ENCODE measurements at regions of chr11 and their contacts with region 1.

Region 1: GRCh38 chr11:118198370-118198769 is 21.9 kb upstream of the SCN2B start:
- DNase-seq: no peak
- ATAC-seq: peak; percentile 94
- H3K4me3 ChIP-seq: no peak overlapping the region
- H3K27ac ChIP-seq: no peak overlapping the region
- H3K4me1 ChIP-seq: no peaks in the 10 kb centered on the region
- H3K27me3 ChIP-seq: no peaks in the 10 kb centered on the region; a peak in 1 of 4 replicates
- CTCF ChIP-seq: peak; percentile 93 to 96 (median 94)
- EP300 ChIP-seq: 0 out of 4 replicates have a peak, but pooled peaks of 1 of the 2 experiments have one; percentile 14
- POLR2A ChIP-seq: no peak
- RAD21 ChIP-seq: peak; percentile 97

Region 2: GRCh38 chr11:116787786-116788486 is 1410.4 kb before region 1 on chr11 and contains the start of gene ZPR1:
- CTCF ChIA-PET with region 1: no interaction called
- POLR2A ChIA-PET with region 1: no interaction called
- RAD21 ChIA-PET with region 1: no interaction called
- SMC1A ChIA-PET with region 1: no interaction called
- in situ Hi-C with region 1: no loop called
- intact Hi-C with region 1: no loop called
- DNase-seq: no peak
- ATAC-seq: peak; percentile 86
- H3K4me3 ChIP-seq: peak within 1 kb of the TSS; percentile 96
- H3K27ac ChIP-seq: peak within 1 kb of the TSS; percentile 72
- H3K4me1 ChIP-seq: peaks cover 18% of the 10 kb centered on the region
- H3K27me3 ChIP-seq: no peaks in the 10 kb centered on the region
- CTCF ChIP-seq: no peak
- EP300 ChIP-seq: no peak
- POLR2A ChIP-seq: peak; percentile 96
- RAD21 ChIP-seq: no peak
- polyA plus RNA-seq, gene ZPR1: 9.3 to 20.4 TPM

Region 3: DNA sequence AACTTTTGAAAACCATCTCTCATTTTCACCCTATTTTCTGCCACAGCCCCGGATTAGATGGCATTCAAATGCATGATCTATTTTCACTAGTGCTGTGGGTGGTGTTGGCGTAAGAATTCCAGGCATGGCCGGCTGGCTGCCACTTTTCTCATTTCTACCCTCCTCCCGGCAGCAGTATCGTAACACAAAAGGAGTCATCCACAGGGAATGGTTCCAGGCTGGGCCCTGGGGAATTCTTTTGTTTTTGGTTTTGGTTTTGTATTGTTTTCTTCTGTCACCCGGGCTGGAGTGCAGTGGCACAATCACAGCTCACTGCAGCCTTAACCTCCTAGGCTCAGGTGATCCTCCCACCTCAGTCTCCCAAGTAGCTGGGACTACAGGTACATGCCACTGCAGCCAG is 12.6 kb after region 1 on chr11:
- CTCF ChIA-PET with region 1: interaction called, 62 read pairs
- POLR2A ChIA-PET with region 1: interaction called, 7 read pairs
- RAD21 ChIA-PET with region 1: interaction called, 21 read pairs
- SMC1A ChIA-PET with region 1: interaction called, 57 read pairs
- in situ Hi-C with region 1: no loop called
- intact Hi-C with region 1: no loop called
- DNase-seq: no peak
- ATAC-seq: no peak
- H3K4me3 ChIP-seq: no peak overlapping the region
- H3K27ac ChIP-seq: no peak overlapping the region
- H3K4me1 ChIP-seq: peaks cover 29% of the 10 kb centered on the region
- H3K27me3 ChIP-seq: no peaks in the 10 kb centered on the region
- CTCF ChIP-seq: no peak
- EP300 ChIP-seq: no peak
- POLR2A ChIP-seq: no peak
- RAD21 ChIP-seq: no peak

Region 4: DNA sequence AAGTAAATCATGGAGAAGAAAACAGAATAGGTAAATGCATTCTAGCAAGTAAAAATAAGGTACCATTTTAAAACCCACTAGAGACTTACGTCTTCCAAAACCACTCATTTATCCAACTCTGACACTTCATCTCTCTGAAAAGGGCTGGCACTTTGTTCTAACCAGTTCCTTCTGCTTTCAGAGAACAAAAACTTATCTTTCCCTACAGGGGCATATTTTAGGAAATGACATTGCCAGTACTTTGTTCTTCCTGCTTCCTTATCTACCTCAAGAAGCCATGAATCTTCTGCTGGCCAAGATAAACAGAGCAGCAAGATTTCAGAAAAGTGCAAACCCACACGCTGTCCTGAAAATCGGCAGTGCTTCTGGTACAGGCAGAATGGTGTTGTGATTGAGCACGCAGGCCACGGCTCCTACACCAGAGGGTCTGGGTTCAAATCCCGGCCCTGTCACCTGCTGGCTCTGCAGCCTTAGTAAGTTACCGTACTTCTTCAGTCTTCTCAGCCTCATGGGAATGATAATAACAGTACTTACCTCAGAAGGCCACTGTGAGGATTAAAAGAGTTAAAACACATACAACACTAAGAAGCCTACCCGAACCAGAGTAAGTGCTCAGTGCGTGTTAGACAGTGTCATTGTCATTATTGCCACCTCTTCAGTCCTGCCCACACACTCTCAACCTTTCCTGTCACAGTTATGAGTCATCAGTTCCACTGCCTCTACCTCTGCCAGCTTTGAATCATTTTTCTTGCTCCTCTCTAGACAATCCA is 42.8 kb after region 1 on chr11:
- CTCF ChIA-PET with region 1: interaction called, 19 read pairs
- POLR2A ChIA-PET with region 1: interaction called, 3 read pairs
- RAD21 ChIA-PET with region 1: interaction called, 16 read pairs
- SMC1A ChIA-PET with region 1: interaction called, 42 read pairs
- in situ Hi-C with region 1: no loop called
- intact Hi-C with region 1: loop called (anchors 2 kb)
- DNase-seq: no peak
- ATAC-seq: peak; percentile 90
- H3K4me3 ChIP-seq: no peak overlapping the region
- H3K27ac ChIP-seq: no peak overlapping the region
- H3K4me1 ChIP-seq: peaks cover 19% of the 10 kb centered on the region
- H3K27me3 ChIP-seq: no peaks in the 10 kb centered on the region
- CTCF ChIP-seq: no peak
- EP300 ChIP-seq: peak; percentile 51 to 82; a peak in 3 of 4 replicates
- POLR2A ChIP-seq: no peak
- RAD21 ChIP-seq: no peak

Region 5: DNA sequence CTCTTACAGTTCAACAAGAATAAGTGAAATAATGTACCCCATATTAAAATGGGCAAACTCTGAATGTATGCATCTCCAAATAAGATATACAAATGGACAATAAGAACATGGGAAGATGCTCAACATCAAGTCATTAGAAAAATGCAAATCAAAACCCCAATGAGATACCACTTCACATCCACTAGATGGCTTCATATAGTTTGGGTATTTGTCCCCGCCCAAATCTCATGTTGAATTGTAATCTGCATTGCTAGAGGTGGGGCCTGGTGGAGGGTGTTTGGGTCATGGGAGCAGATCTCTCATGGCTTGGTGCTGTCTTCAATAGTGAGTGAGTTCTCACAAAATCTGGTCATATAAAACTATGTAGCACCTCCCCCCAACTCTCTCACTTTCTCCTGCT is 60.0 kb after region 1 on chr11:
- CTCF ChIA-PET with region 1: interaction called, 39 read pairs
- POLR2A ChIA-PET with region 1: no interaction called
- RAD21 ChIA-PET with region 1: interaction called, 16 read pairs
- SMC1A ChIA-PET with region 1: interaction called, 17 read pairs
- in situ Hi-C with region 1: no loop called
- intact Hi-C with region 1: loop called (anchors 1 kb)
- DNase-seq: no peak
- ATAC-seq: no peak
- H3K4me3 ChIP-seq: no peak overlapping the region
- H3K27ac ChIP-seq: no peak overlapping the region
- H3K4me1 ChIP-seq: peaks cover 2% of the 10 kb centered on the region; the same call in 1 of the 2 replicates
- H3K27me3 ChIP-seq: peaks cover 0 to 2% of the 10 kb centered on the region in 2 experiments; a peak in 1 of 4 replicates
- CTCF ChIP-seq: peak in 1 of 3 experiments; percentile 25; a peak in 1 of 6 replicates
- EP300 ChIP-seq: no peak
- POLR2A ChIP-seq: no peak
- RAD21 ChIP-seq: no peak

Region 6: DNA sequence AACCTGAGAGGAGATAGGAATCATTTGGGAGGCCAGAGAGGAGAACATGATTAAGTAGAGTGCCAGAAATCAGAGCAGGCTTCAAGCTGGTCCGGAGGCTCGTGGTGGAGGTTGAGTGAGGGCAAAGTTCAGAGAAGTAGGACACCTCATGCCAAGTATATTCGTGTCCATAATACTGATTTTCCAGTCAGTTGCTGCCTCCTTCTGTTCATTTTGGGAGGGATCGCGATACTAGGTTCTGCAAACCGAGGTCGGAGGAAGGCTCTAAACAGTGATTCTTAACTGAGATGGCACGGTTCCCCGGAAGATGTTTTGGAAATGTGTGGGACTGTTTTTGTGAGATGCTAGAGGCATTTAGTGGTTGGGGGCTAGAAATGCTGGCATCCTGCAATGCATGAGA is 92.6 kb after region 1 on chr11:
- CTCF ChIA-PET with region 1: interaction called, 41 read pairs
- POLR2A ChIA-PET with region 1: no interaction called
- RAD21 ChIA-PET with region 1: interaction called, 71 read pairs
- SMC1A ChIA-PET with region 1: interaction called, 77 read pairs
- in situ Hi-C with region 1: loop called (anchors 5 kb)
- intact Hi-C with region 1: loop called (anchors 1 kb)
- DNase-seq: no peak
- ATAC-seq: peak; percentile 86
- H3K4me3 ChIP-seq: no peak overlapping the region
- H3K27ac ChIP-seq: no peak overlapping the region
- H3K4me1 ChIP-seq: no peaks in the 10 kb centered on the region
- H3K27me3 ChIP-seq: no peaks in the 10 kb centered on the region; a peak in 2 of 4 replicates
- CTCF ChIP-seq: peak; percentile 47 to 70 (median 49); a peak in 4 of 6 replicates
- EP300 ChIP-seq: no peak
- POLR2A ChIP-seq: no peak
- RAD21 ChIP-seq: peak; percentile 80

Region 7: DNA sequence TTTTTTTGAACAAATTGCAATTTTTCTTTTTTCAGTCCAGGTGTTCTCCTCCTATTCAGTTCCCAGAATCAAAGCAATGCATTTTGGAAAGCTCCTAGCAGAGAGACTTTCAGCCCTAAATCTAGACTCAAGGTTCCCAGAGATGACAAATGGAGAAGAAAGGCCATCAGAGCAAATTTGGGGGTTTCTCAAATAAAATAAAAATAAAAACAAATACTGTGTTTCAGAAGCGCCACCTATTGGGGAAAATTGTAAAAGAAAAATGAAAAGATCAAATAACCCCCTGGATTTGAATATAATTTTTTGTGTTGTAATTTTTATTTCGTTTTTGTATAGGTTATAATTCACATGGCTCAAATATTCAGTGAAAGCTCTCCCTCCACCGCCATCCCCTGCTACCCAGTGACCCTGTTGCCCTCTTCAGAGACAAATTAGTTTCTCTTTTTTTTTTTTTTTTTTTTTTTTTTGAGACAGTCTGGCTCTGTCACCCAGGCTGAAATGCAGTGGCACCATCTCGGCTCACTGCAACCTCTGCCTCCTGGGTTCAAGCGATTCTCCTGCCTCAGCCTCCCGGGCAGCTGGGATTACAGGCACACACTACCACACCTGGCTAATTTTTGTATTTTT is 154.8 kb after region 1 on chr11:
- CTCF ChIA-PET with region 1: interaction called, 58 read pairs
- POLR2A ChIA-PET with region 1: interaction called, 11 read pairs
- RAD21 ChIA-PET with region 1: interaction called, 22 read pairs
- SMC1A ChIA-PET with region 1: interaction called, 15 read pairs
- in situ Hi-C with region 1: loop called (anchors 5 kb)
- intact Hi-C with region 1: loop called (anchors 2 kb)
- DNase-seq: no peak
- ATAC-seq: no peak
- H3K4me3 ChIP-seq: no peak overlapping the region
- H3K27ac ChIP-seq: no peak overlapping the region
- H3K4me1 ChIP-seq: no peaks in the 10 kb centered on the region
- H3K27me3 ChIP-seq: peaks cover 0 to 4% of the 10 kb centered on the region in 2 experiments; a peak in 1 of 4 replicates
- CTCF ChIP-seq: peak; percentile 34 to 49 (median 47); a peak in 5 of 6 replicates
- EP300 ChIP-seq: no peak
- POLR2A ChIP-seq: no peak
- RAD21 ChIP-seq: peak; percentile 55

Region 8: DNA sequence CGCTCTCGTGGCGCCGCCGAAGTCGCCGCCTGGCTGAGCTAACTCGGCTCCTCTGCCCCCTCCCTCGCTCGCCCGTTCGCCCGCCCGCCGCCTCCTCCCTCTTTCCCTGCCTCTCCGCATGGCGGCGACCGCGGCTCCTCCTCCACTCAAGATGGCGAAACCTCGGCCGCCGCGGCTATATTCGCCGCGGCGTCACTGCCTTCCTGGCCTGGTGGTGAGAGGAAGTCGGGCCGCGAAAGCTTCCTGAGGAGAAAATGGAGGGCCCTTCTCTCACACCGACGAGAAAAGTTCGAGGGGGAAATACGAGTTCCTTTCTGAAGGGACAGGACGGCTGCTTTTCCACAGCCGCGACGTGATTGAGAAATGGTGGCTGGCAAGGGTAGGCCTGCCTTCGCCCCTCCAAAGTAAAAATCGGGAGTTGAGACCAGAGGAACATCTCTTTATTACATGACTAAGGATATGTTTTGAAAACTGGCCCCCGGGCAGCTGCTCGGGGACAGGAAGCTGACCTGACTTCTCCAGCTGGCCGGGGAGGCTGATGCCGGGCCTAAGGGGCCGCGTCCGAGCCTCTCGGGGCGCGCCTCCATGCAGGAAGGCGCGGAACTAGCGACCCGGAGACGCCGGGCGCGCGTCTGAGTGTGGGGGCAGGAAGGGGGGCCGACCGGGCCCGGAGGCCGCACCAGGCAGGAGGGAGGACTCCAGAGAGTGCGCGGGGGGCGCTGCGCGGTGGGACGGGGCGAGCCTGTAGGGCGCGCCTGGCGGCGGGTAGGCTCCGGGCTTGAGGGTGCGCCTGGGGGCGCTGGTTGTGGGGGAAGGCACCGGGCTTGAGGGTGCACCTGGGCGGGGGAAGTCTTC is 593.0 kb after region 1 on chr11 and contains the start of gene DDX6:
- CTCF ChIA-PET with region 1: no interaction called
- POLR2A ChIA-PET with region 1: no interaction called
- RAD21 ChIA-PET with region 1: no interaction called
- SMC1A ChIA-PET with region 1: no interaction called
- in situ Hi-C with region 1: no loop called
- intact Hi-C with region 1: no loop called
- DNase-seq: peak; percentile 19
- ATAC-seq: peak; percentile 69
- H3K4me3 ChIP-seq: peak within 1 kb of the TSS; percentile 81
- H3K27ac ChIP-seq: peak within 1 kb of the TSS; percentile 100
- H3K4me1 ChIP-seq: no peaks in the 10 kb centered on the region; the same call in 1 of the 2 replicates
- H3K27me3 ChIP-seq: no peaks in the 10 kb centered on the region
- CTCF ChIP-seq: peak; percentile 21 to 41 (median 32); a peak in 3 of 6 replicates
- EP300 ChIP-seq: no peak
- POLR2A ChIP-seq: peak; percentile 82
- RAD21 ChIP-seq: peak; percentile 14; the same call in 1 of the 2 replicates
- polyA plus RNA-seq, gene DDX6: 6.6 to 20.0 TPM

Measured in GM12878 (cell line).